ENCODE measurements at regions of chr4 and their contacts with region 1.

Region 1: GRCh38 chr4:108570993-108571569 is 49.3 kb upstream of the RPL34 start:
- DNase-seq: no peak
- ATAC-seq: no peak
- H3K4me3 ChIP-seq: no peak overlapping the region
- H3K4me3 Mint-ChIP-seq: no peak overlapping the region
- H3K27ac ChIP-seq: no peak overlapping the region
- H3K27ac Mint-ChIP-seq: no peak overlapping the region
- H3K4me1 ChIP-seq: peaks cover 4 to 6% of the 10 kb centered on the region in 2 experiments
- H3K4me1 Mint-ChIP-seq: peaks cover 19 to 30% (median 28%) of the 10 kb centered on the region in 3 donors
- H3K27me3 ChIP-seq: peaks cover 0 to 6% of the 10 kb centered on the region in 2 experiments
- H3K27me3 Mint-ChIP-seq: no peaks in the 10 kb centered on the region

Region 2: GRCh38 chr4:108030332-108030731 is 540.7 kb before region 1 on chr4:
- CTCF ChIA-PET with region 1: interaction called, 17 to 39 read pairs
- POLR2A ChIA-PET with region 1: interaction called in 1 of 2 experiments, 5 read pairs
- DNase-seq: peak; percentile 45 to 85 (median 67)
- ATAC-seq: peak; percentile 81 to 91 (median 82)
- H3K4me3 ChIP-seq: no peak overlapping the region
- H3K4me3 Mint-ChIP-seq: peak overlapping the region; percentile 21 to 69 (median 46)
- H3K27ac ChIP-seq: peak overlapping the region; percentile 52
- H3K27ac Mint-ChIP-seq: peak overlapping the region; percentile 87 to 94
- H3K4me1 ChIP-seq: peaks cover 40% of the 10 kb centered on the region in 2 experiments
- H3K4me1 Mint-ChIP-seq: peaks cover 52 to 63% (median 58%) of the 10 kb centered on the region in 3 donors
- H3K27me3 ChIP-seq: no peaks in the 10 kb centered on the region
- H3K27me3 Mint-ChIP-seq: no peaks in the 10 kb centered on the region

Region 3: GRCh38 chr4:108060164-108060563 is 510.9 kb before region 1 on chr4:
- CTCF ChIA-PET with region 1: interaction called, 9 to 22 read pairs
- POLR2A ChIA-PET with region 1: no interaction called
- DNase-seq: peak in 1 of 35 experiments; percentile 46
- ATAC-seq: no peak
- H3K4me3 ChIP-seq: no peak overlapping the region
- H3K4me3 Mint-ChIP-seq: peak overlapping the region in 1 of 3 donors; percentile 37
- H3K27ac ChIP-seq: peak overlapping the region; percentile 3
- H3K27ac Mint-ChIP-seq: peak overlapping the region; percentile 81 to 88
- H3K4me1 ChIP-seq: peaks cover 39 to 45% of the 10 kb centered on the region in 2 experiments
- H3K4me1 Mint-ChIP-seq: peaks cover 84 to 93% (median 90%) of the 10 kb centered on the region in 3 donors
- H3K27me3 ChIP-seq: no peaks in the 10 kb centered on the region
- H3K27me3 Mint-ChIP-seq: no peaks in the 10 kb centered on the region

Region 4: DNA sequence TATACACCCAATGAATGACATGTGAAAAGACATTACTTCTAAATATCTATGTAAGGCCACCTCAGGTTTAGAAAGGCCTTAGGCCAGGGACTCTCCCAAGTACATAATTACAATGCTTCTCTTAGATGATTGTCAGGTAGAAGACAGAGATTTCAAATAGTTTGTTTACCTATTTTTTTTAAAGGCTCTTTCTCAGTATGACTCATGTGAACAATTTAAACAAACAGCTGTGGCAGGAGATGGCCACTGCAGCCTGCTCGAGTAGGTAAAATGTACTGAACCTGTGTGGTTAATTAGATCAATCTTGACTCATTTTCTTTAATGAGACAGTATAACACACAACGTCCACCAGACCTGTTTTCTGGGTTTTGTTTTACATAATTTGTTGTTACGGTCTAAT is 452.6 kb before region 1 on chr4:
- CTCF ChIA-PET with region 1: interaction called, 3 to 16 read pairs
- POLR2A ChIA-PET with region 1: no interaction called
- DNase-seq: peak in 11 of 35 experiments; percentile 22 to 60 (median 34)
- ATAC-seq: peak; percentile 14 to 54 (median 30)
- H3K4me3 ChIP-seq: no peak overlapping the region
- H3K4me3 Mint-ChIP-seq: peak overlapping the region; percentile 35 to 67 (median 44)
- H3K27ac ChIP-seq: peak overlapping the region; percentile 66
- H3K27ac Mint-ChIP-seq: peak overlapping the region; percentile 92 to 93
- H3K4me1 ChIP-seq: peaks cover 51 to 95% of the 10 kb centered on the region in 2 experiments
- H3K4me1 Mint-ChIP-seq: peaks cover 91 to 94% (median 93%) of the 10 kb centered on the region in 3 donors
- H3K27me3 ChIP-seq: no peaks in the 10 kb centered on the region
- H3K27me3 Mint-ChIP-seq: no peaks in the 10 kb centered on the region

Region 5: DNA sequence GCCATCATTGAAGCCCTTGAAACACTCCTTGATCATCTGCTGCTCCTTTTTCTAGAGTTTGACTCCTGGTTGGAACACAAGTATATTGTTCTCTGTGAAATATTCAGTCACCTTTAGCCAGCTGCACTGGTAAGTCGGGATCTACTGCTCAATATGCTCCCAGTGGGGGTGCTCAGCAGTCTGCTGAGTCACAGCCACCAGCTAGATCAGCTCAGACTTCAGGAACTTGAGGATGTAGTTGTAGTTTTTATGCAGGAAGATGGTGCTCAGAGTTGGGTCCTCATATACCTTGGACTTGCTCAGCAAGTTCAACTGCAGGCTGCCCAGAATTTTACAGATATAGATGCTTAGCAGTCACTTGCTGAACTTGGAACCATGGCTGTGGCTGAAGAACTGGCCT is 153.2 kb before region 1 on chr4:
- CTCF ChIA-PET with region 1: no interaction called
- POLR2A ChIA-PET with region 1: no interaction called
- DNase-seq: no peak
- ATAC-seq: no peak
- H3K4me3 ChIP-seq: no peak overlapping the region
- H3K4me3 Mint-ChIP-seq: no peak overlapping the region
- H3K27ac ChIP-seq: no peak overlapping the region
- H3K27ac Mint-ChIP-seq: no peak overlapping the region
- H3K4me1 ChIP-seq: no peaks in the 10 kb centered on the region
- H3K4me1 Mint-ChIP-seq: peaks cover 10 to 17% (median 17%) of the 10 kb centered on the region in 3 donors
- H3K27me3 ChIP-seq: no peaks in the 10 kb centered on the region
- H3K27me3 Mint-ChIP-seq: no peaks in the 10 kb centered on the region

Region 6: DNA sequence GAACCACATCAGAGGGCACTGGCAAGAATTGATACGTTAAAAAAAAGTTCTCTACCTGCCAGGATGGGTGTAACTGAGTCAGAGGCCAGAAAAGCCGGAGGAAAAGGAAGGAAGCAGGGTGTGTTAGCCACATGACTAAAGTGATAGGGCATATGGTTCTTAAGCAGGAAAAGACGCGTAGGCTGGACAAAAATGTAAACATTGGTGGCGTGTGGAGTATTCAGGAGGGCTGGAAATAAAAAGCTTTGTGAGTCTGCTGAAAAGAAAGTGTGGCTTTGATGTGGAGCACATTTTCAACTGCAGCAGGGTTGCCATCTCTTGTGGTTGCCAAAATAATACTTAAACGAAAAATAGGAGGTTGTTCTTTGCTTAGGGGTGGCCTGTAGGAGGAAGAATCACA is 137.2 kb before region 1 on chr4:
- CTCF ChIA-PET with region 1: no interaction called
- POLR2A ChIA-PET with region 1: no interaction called
- DNase-seq: peak in 31 of 35 experiments; percentile 3 to 68 (median 22)
- ATAC-seq: peak; percentile 80 to 87 (median 84)
- H3K4me3 ChIP-seq: peak overlapping the region in 1 of 2 donors; percentile 20
- H3K4me3 Mint-ChIP-seq: peak overlapping the region; percentile 13 to 44 (median 40)
- H3K27ac ChIP-seq: peak overlapping the region; percentile 59
- H3K27ac Mint-ChIP-seq: peak overlapping the region; percentile 85 to 92
- H3K4me1 ChIP-seq: peaks cover 21 to 25% of the 10 kb centered on the region in 2 experiments
- H3K4me1 Mint-ChIP-seq: peaks cover 45 to 66% (median 63%) of the 10 kb centered on the region in 3 donors
- H3K27me3 ChIP-seq: no peaks in the 10 kb centered on the region
- H3K27me3 Mint-ChIP-seq: no peaks in the 10 kb centered on the region

Region 7: DNA sequence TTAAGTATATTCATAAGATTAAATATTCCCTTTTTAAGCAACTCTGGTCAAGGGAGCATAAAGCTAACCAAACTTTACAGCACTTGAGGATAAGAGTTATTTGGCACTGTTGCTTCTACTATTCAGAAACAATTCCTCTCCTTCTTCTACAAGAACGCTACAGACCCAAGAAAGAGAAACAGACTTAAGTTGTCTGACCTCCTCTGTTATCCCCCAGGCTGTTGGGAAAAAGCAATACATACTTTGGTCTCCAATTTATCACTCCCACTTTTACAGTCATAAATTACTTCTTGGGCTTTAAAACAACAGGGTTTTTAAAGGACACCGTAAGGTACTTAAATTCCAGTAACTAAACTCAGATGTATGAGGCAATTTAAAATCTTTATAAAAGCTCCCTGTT is 584.0 kb after region 1 on chr4:
- CTCF ChIA-PET with region 1: no interaction called
- POLR2A ChIA-PET with region 1: no interaction called
- DNase-seq: no peak
- ATAC-seq: no peak
- H3K4me3 ChIP-seq: no peak overlapping the region
- H3K4me3 Mint-ChIP-seq: no peak overlapping the region
- H3K27ac ChIP-seq: no peak overlapping the region
- H3K27ac Mint-ChIP-seq: no peak overlapping the region
- H3K4me1 ChIP-seq: no peaks in the 10 kb centered on the region
- H3K4me1 Mint-ChIP-seq: no peaks in the 10 kb centered on the region
- H3K27me3 ChIP-seq: no peaks in the 10 kb centered on the region
- H3K27me3 Mint-ChIP-seq: peaks cover 3% of the 10 kb centered on the region in 2 donors